ENCODE measurements at regions of chr17 and their contacts with region 1.

Region 1: GRCh38 chr17:75109407-75110233 is at the start of gene ARMC7:
- DNase-seq: peak; percentile 84 to 93 (median 89)
- H3K4me3 ChIP-seq: peak within 1 kb of the TSS in 3 of 4 donors; percentile 51 to 92 (median 85)
- H3K27ac ChIP-seq: peak within 1 kb of the TSS in 2 of 5 donors; percentile 60 to 65
- H3K4me1 ChIP-seq: peaks cover 0 to 25% of the 10 kb centered on the region in 2 donors
- H3K27me3 ChIP-seq: no peaks in the 10 kb centered on the region
- CTCF ChIP-seq: no peak
- POLR2A ChIP-seq: peak in 1 of 2 donors; percentile 52
- total RNA-seq, gene ARMC7: 3.7 to 13.8 (median 8.8) TPM

Region 2: DNA sequence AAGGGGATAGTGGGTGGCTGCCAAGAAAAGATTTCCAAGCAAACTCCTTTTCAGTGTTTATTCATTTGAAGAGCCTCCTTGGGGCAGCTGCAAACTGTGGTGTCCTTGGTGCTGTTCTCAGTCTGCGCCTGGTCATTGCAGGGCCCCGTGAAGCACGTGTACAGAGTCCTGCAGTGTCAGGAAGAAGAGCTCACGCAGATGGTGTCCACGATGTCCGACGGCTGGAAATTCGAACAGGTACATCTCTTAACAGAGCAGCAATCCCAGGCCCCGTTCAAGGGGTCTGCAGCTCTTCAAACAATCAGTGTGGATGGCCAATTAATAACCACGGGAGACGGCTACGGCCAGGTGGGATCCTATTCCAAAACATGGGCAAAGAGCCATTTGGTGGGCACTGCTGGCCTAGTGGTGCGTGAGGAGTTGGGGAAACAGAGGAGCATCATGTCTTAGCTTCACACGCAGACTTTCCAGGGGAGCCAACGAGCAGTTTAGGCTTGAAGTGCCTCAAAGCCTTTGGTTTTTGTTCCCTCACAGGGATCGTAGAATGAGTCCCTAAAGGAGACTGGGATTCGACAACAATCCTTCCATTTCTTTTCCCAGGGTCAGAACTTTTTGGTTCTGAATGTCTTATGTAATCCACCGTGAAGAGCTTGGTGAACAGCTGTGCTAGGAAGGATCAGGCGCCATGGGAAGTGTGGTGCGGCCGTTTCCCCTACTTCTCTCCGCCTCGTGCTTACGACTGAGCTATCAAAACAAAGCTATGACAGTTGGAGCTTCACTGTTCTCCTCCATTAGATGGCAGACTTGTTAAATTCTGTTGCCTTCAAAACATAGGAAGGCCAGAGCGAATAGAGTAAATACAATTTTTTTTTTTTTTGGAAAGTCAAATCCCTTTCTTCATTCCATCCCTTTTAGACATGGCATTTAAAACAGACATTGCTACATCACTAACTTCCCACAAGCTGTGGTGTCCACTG is 50.0 kb before region 1 on chr17:
- intact Hi-C with region 1: loop called (anchors 5 to 10 kb)
- DNase-seq: peak in 2 of 7 donors; percentile 25 to 35
- H3K4me3 ChIP-seq: no peak overlapping the region
- H3K27ac ChIP-seq: no peak overlapping the region
- H3K4me1 ChIP-seq: no peaks in the 10 kb centered on the region
- H3K27me3 ChIP-seq: no peaks in the 10 kb centered on the region
- CTCF ChIP-seq: peak in 5 of 6 experiments; percentile 11 to 48 (median 38)
- POLR2A ChIP-seq: no peak

Region 3: GRCh38 chr17:75173526-75173925 is 63.9 kb after region 1 on chr17:
- intact Hi-C with region 1: loop called in 1 of 2 experiments (anchors 5 kb)
- DNase-seq: no peak
- H3K4me3 ChIP-seq: no peak overlapping the region
- H3K27ac ChIP-seq: no peak overlapping the region
- H3K4me1 ChIP-seq: no peaks in the 10 kb centered on the region
- H3K27me3 ChIP-seq: no peaks in the 10 kb centered on the region
- CTCF ChIP-seq: no peak
- POLR2A ChIP-seq: no peak

Region 4: DNA sequence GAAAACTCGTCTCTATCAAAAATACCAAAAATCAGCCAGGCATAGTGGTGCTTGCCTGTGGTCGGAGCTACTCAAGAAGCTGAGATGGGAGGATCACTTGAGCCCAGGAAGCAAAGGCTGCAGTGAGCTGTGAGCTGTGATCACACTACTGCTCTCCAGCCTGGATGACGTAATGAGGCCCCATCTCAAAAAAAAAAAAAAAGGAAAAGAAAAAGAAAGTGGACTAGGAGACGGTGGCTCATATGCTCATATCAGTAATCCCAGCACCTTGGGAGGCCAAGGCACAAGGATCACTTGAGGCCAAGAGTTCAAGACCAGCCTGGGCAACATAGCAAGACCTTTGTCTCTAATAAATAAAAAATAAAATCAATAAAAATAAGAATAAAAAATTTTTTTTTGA is 82.0 kb after region 1 on chr17:
- intact Hi-C with region 1: loop called in 1 of 2 experiments (anchors 10 kb)
- DNase-seq: no peak
- H3K4me3 ChIP-seq: no peak overlapping the region
- H3K27ac ChIP-seq: no peak overlapping the region
- H3K4me1 ChIP-seq: no peaks in the 10 kb centered on the region
- H3K27me3 ChIP-seq: no peaks in the 10 kb centered on the region
- CTCF ChIP-seq: no peak
- POLR2A ChIP-seq: no peak

Region 5: GRCh38 chr17:75205037-75205792 is 95.6 kb after region 1 on chr17 and contains the start of gene NUP85:
- intact Hi-C with region 1: loop called in 1 of 2 experiments (anchors 10 kb)
- DNase-seq: peak; percentile 92 to 94 (median 93)
- H3K4me3 ChIP-seq: peak within 1 kb of the TSS; percentile 46 to 96 (median 54)
- H3K27ac ChIP-seq: peak within 1 kb of the TSS; percentile 75 to 97 (median 91)
- H3K4me1 ChIP-seq: peaks cover 9 to 14% of the 10 kb centered on the region in 2 donors
- H3K27me3 ChIP-seq: no peaks in the 10 kb centered on the region
- CTCF ChIP-seq: peak in 3 of 6 experiments; percentile 9 to 30 (median 18)
- POLR2A ChIP-seq: peak in 1 of 2 donors; percentile 81
- total RNA-seq, gene NUP85: 18.7 to 53.8 (median 30.1) TPM